Calu3 (cell line): ENCODE measurements at regions of chr3 and their contacts with region 1.

Region 1: DNA sequence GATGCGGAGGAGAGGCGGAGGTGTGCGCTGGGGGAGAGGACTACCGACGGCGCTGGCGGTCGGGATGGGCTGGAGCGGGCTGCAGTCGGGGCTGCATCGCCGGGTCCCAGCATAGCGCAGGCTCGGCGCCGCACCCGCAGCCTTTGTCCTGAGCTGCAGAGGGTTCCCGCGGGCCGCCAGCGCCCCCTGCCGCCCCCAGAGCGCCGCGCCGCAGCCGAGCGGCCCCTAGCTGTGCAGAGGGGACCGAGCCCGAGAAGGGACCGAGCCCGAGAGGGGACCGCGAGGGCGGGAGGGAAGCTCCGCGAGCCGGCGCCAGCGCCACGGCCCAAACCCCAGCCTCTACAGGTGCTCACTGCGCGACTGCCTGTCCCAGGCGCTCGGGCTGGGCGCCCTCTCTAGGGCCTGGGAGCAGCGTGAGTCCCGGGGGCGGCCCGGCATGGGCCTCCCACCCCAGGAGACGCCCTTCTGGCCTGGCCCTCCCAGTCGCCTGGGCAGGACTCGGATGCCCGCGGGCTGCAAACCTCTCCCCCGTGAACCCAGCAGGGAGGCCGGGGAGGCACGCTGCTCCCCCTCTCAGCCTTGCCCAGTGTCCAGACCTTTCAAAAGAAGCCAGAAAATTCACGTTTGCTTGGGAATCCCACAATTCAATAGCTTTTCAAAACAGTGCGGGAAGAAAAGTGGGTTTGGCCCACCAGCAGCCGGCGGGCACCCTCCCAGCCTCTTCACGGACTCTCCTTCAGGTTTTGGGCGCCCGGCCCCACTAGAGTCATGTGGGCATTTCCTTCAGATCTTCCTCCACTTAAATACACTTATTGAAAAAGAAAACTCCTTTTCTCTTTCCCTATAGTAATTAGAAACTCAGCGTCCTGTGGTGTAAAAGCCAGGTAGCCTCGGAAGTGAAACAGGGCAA is 134.7 kb downstream of the TPRA1 start:
- DNase-seq: peak; percentile 97
- H3K4me3 Mint-ChIP-seq: peak overlapping the region; percentile 54
- H3K27ac Mint-ChIP-seq: no peak overlapping the region
- H3K4me1 Mint-ChIP-seq: peaks cover 21% of the 10 kb centered on the region
- H3K27me3 Mint-ChIP-seq: peaks cover 88% of the 10 kb centered on the region
- CTCF ChIP-seq: peak; percentile 99

Region 2: GRCh38 chr3:126679318-126679751 is 776.5 kb before region 1 on chr3:
- CTCF ChIA-PET with region 1: interaction called, 3 read pairs
- intact Hi-C with region 1: loop called (anchors 1 kb)
- DNase-seq: peak; percentile 95
- H3K4me3 Mint-ChIP-seq: peak overlapping the region; percentile 25
- H3K27ac Mint-ChIP-seq: no peak overlapping the region
- H3K4me1 Mint-ChIP-seq: peaks cover 10% of the 10 kb centered on the region
- H3K27me3 Mint-ChIP-seq: peaks cover 75% of the 10 kb centered on the region
- CTCF ChIP-seq: peak; percentile 100

Region 3: GRCh38 chr3:126982471-126983175 is 473.2 kb before region 1 on chr3 and contains the start of gene PLXNA1:
- CTCF ChIA-PET with region 1: interaction called, 17 read pairs
- intact Hi-C with region 1: loop called (anchors 5 kb)
- DNase-seq: peak; percentile 91
- H3K4me3 Mint-ChIP-seq: peak within 1 kb of the TSS; percentile 75
- H3K27ac Mint-ChIP-seq: no peak within 1 kb of the TSS
- H3K4me1 Mint-ChIP-seq: peaks cover 25% of the 10 kb centered on the region
- H3K27me3 Mint-ChIP-seq: peaks cover 32% of the 10 kb centered on the region
- CTCF ChIP-seq: peak; percentile 99
- total RNA-seq, gene PLXNA1: 81.1 and 84.3 TPM in 2 replicates

Region 4: GRCh38 chr3:127374086-127375010 is 81.4 kb before region 1 on chr3:
- CTCF ChIA-PET with region 1: interaction called, 14 read pairs
- intact Hi-C with region 1: no loop called
- DNase-seq: peak; percentile 69
- H3K4me3 Mint-ChIP-seq: no peak overlapping the region
- H3K27ac Mint-ChIP-seq: no peak overlapping the region
- H3K4me1 Mint-ChIP-seq: no peaks in the 10 kb centered on the region
- H3K27me3 Mint-ChIP-seq: peaks cover 92% of the 10 kb centered on the region
- CTCF ChIP-seq: peak; percentile 55

Region 5: GRCh38 chr3:127612966-127613365 is 157.2 kb after region 1 on chr3:
- CTCF ChIA-PET with region 1: no interaction called
- intact Hi-C with region 1: no loop called
- DNase-seq: no peak
- H3K4me3 Mint-ChIP-seq: no peak overlapping the region
- H3K27ac Mint-ChIP-seq: no peak overlapping the region
- H3K4me1 Mint-ChIP-seq: peaks cover 16% of the 10 kb centered on the region
- H3K27me3 Mint-ChIP-seq: no peaks in the 10 kb centered on the region
- CTCF ChIP-seq: no peak